Activated T-helper 2 cell treated with anti-CD3 and anti-CD28 coated beads, Interferon-gamma antibody, Interleukin-2, Interleukin-4, amounts not matched to agents 10 μg/mL and 5 μg/mL and 100 μg/mL, durations not matched to agents 14 hours and 24 hours and 36 hours (primary cell): ENCODE measurements at regions of chr2 and their contacts with region 1.

Region 1: GRCh38 chr2:181178823-181179412 is 198.5 kb downstream of the UBE2E3 start:
- DNase-seq: no peak
- H3K4me3 Mint-ChIP-seq: no peak overlapping the region
- H3K27ac Mint-ChIP-seq: peak overlapping the region; percentile 86
- H3K4me1 Mint-ChIP-seq: peaks cover 53% of the 10 kb centered on the region
- H3K27me3 Mint-ChIP-seq: no peaks in the 10 kb centered on the region

Region 2: GRCh38 chr2:181142514-181142913 is 36.4 kb before region 1 on chr2:
- intact Hi-C with region 1: loop called (anchors 2 kb)
- DNase-seq: no peak
- H3K4me3 Mint-ChIP-seq: peak overlapping the region; percentile 81
- H3K27ac Mint-ChIP-seq: peak overlapping the region; percentile 94
- H3K4me1 Mint-ChIP-seq: peaks cover 74% of the 10 kb centered on the region
- H3K27me3 Mint-ChIP-seq: no peaks in the 10 kb centered on the region

Region 3: DNA sequence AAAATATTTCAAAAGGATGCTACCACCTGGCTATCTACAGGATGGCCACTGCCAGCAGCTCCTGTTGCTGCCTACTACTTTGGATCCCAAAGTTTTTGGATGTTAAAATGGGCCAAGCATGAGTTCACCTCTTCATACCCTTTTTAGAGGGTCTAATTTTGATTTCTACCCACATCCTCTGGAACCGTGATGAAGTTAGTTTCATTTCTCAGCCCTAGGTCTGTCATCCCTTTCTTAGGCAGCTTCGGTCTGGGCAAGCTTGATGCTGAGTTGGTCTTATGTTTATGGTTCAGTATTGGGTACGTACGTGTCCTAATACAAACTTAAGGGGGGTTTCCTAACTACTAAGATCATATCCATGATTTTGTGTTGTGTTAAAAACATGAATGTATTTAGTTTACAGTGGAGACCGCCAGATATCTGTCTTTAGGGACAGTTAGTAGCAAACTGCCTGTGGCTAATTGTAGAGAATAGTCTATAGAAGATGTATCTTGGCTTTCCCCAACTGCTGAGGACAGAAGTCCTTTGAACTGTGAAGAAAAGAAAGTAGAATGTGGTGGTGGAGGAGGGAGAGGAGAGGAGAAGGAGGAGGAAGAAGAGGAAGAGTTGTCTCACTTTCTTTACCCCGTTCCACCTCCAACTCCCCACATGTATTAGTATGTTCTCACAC is 13.6 kb before region 1 on chr2:
- intact Hi-C with region 1: loop called (anchors 1 kb)
- DNase-seq: no peak
- H3K4me3 Mint-ChIP-seq: peak overlapping the region; percentile 51
- H3K27ac Mint-ChIP-seq: peak overlapping the region; percentile 94
- H3K4me1 Mint-ChIP-seq: peaks cover 60% of the 10 kb centered on the region
- H3K27me3 Mint-ChIP-seq: no peaks in the 10 kb centered on the region

Region 4: DNA sequence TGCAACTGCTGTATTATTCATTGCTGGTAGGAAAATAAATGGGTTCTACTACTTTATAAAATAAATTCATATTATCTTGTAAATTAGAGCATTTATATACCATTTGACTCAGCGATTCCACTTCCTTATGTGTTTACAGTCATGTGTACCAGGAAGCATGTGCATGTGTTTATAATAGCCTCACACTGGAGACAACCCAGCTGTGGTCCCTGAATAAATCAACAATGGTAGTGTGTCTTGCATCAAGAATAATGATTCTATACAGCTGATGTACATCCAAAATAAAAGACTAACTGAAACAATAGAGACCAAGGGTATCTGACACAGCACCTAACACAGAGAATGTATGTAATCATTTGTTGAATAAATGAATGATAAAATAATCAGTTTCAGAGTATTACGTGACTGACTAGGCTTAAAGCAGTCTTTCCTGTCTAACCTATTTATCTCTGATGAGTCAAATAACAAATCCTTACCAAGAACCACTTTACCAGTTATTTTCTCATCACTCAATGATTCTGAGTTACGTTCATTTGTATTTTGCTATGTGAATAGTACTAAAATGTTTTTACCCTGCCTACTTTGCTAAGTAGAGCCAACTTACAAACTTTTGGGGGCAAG is 18.3 kb after region 1 on chr2:
- intact Hi-C with region 1: loop called (anchors 1 kb)
- DNase-seq: no peak
- H3K4me3 Mint-ChIP-seq: peak overlapping the region; percentile 37
- H3K27ac Mint-ChIP-seq: peak overlapping the region; percentile 80
- H3K4me1 Mint-ChIP-seq: peaks cover 47% of the 10 kb centered on the region
- H3K27me3 Mint-ChIP-seq: no peaks in the 10 kb centered on the region

Region 5: GRCh38 chr2:181239201-181239799 is 60.4 kb after region 1 on chr2:
- intact Hi-C with region 1: loop called (anchors 5 kb)
- DNase-seq: no peak
- H3K4me3 Mint-ChIP-seq: no peak overlapping the region
- H3K27ac Mint-ChIP-seq: no peak overlapping the region
- H3K4me1 Mint-ChIP-seq: peaks cover 76% of the 10 kb centered on the region
- H3K27me3 Mint-ChIP-seq: no peaks in the 10 kb centered on the region

Region 6: GRCh38 chr2:181312515-181312927 is 133.6 kb after region 1 on chr2:
- intact Hi-C with region 1: loop called (anchors 2 kb)
- DNase-seq: peak; percentile 34
- H3K4me3 Mint-ChIP-seq: peak overlapping the region; percentile 82
- H3K27ac Mint-ChIP-seq: peak overlapping the region; percentile 98
- H3K4me1 Mint-ChIP-seq: peaks cover 62% of the 10 kb centered on the region
- H3K27me3 Mint-ChIP-seq: no peaks in the 10 kb centered on the region